Activated T-helper 2 cell treated with anti-CD3 and anti-CD28 coated beads, Interferon-gamma antibody, Interleukin-2, Interleukin-4, amounts not matched to agents 10 μg/mL and 5 μg/mL and 100 μg/mL, durations not matched to agents 14 hours and 24 hours and 36 hours (primary cell): ENCODE measurements at regions of chr7 and their contacts with region 1.

Region 1: GRCh38 chr7:26667500-26668133 is 196.8 kb downstream of the SKAP2 start:
- DNase-seq: peak; percentile 52
- H3K4me3 Mint-ChIP-seq: no peak overlapping the region
- H3K27ac Mint-ChIP-seq: no peak overlapping the region
- H3K4me1 Mint-ChIP-seq: peaks cover 13% of the 10 kb centered on the region
- H3K27me3 Mint-ChIP-seq: peaks cover 41% of the 10 kb centered on the region

Region 2: GRCh38 chr7:26278770-26279169 is 388.8 kb before region 1 on chr7:
- intact Hi-C with region 1: loop called (anchors 5 kb)
- DNase-seq: no peak
- H3K4me3 Mint-ChIP-seq: no peak overlapping the region
- H3K27ac Mint-ChIP-seq: no peak overlapping the region
- H3K4me1 Mint-ChIP-seq: peaks cover 16% of the 10 kb centered on the region
- H3K27me3 Mint-ChIP-seq: no peaks in the 10 kb centered on the region

Region 3: GRCh38 chr7:26365077-26365900 is 302.3 kb before region 1 on chr7:
- intact Hi-C with region 1: loop called (anchors 1 kb)
- DNase-seq: peak; percentile 30
- H3K4me3 Mint-ChIP-seq: no peak overlapping the region
- H3K27ac Mint-ChIP-seq: peak overlapping the region; percentile 63
- H3K4me1 Mint-ChIP-seq: peaks cover 20% of the 10 kb centered on the region
- H3K27me3 Mint-ChIP-seq: no peaks in the 10 kb centered on the region

Region 4: DNA sequence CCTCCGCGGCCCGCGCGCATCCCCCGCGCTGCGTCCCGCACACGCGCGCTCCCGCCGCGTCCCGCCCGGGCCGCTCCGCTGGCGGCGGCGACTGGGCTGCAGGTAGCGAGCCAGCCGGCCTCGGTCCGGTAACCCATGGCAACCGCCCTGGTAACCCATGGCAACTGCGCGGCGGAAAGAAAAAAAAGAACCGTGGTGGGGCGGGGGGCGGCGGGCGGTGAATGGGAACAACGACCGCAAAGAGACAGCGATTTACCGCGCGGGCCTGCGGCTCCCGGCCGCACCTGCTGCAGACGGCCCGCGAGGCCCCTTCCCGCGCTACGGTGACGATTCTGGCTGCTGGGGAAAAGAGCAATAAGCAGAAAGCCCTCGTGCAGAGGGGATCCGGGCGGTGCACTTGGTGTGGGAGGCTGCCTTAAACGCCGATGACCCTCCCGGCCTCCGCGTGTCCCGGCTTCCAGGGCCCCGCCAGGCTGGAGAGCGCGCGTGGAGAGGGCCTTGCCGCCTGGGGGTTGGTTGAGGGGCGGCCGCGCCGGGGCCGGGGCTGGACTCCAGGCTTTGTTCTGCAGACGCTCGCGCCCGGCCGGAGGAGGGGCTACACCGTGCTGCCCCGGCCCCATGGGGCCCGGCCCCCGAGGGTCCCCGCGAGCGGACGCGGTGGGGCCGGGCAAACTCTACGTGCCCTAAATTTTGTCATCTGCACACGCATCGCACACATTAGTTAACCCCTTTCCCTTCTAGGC is 291.3 kb before region 1 on chr7:
- intact Hi-C with region 1: loop called (anchors 1 kb)
- DNase-seq: peak; percentile 27
- H3K4me3 Mint-ChIP-seq: peak overlapping the region; percentile 81
- H3K27ac Mint-ChIP-seq: peak overlapping the region; percentile 71
- H3K4me1 Mint-ChIP-seq: peaks cover 4% of the 10 kb centered on the region
- H3K27me3 Mint-ChIP-seq: peaks cover 7% of the 10 kb centered on the region